Activated CD8-positive, alpha-beta T cell treated with anti-CD3 and anti-CD28 coated beads, Interleukin-2, amount 10 ng/mL, durations not matched to agents 7 days and 5 days (primary cell): ENCODE measurements at regions of chr4 and their contacts with region 1.

Region 1: GRCh38 chr4:25367004-25367621 is 9.9 kb upstream of the ANAPC4 start:
- DNase-seq: no peak
- ATAC-seq: no peak
- H3K4me3 Mint-ChIP-seq: no peak overlapping the region
- H3K27ac Mint-ChIP-seq: no peak overlapping the region
- H3K4me1 Mint-ChIP-seq: no peaks in the 10 kb centered on the region
- H3K27me3 Mint-ChIP-seq: no peaks in the 10 kb centered on the region

Region 2: DNA sequence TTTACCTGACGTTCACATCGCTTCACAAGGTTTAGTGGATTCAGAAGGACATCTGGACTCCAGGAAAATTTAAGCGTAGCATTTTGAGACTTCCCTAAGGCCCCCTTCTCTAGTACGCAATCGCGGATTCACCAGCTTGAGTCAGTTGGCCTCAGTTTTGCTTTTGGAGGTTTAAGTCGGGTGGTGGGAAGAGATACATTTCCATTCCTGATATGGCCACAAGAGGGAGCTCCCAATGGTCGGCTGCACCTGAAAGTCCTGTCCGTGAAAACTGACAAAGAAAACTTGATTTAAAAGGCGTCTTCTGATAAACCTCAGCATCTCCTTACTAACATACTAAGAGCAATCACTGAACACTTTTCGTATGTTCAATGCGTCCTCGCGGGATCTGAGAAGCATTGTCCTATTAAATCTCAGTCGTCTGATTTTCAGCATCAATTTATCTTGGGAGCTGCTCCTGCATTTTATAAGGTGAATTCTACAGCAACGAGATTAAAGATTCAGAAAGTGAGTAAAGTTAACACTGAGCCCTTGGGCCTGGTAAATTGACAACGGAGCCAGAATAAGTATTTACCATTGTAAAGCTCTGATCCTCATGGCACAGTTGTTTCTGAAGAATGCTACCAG is 386.9 kb before region 1 on chr4:
- CTCF ChIA-PET with region 1: interaction called, 52 read pairs
- POLR2A ChIA-PET with region 1: no interaction called
- DNase-seq: peak; percentile 66
- ATAC-seq: peak; percentile 61
- H3K4me3 Mint-ChIP-seq: peak overlapping the region; percentile 36
- H3K27ac Mint-ChIP-seq: no peak overlapping the region
- H3K4me1 Mint-ChIP-seq: peaks cover 11% of the 10 kb centered on the region
- H3K27me3 Mint-ChIP-seq: peaks cover 3% of the 10 kb centered on the region

Region 3: GRCh38 chr4:25159884-25160713 is 207.0 kb before region 1 on chr4 and contains the start of gene SEPSECS:
- CTCF ChIA-PET with region 1: interaction called, 16 read pairs
- POLR2A ChIA-PET with region 1: no interaction called
- DNase-seq: peak; percentile 97
- ATAC-seq: peak; percentile 89
- H3K4me3 Mint-ChIP-seq: peak within 1 kb of the TSS; percentile 89
- H3K27ac Mint-ChIP-seq: peak within 1 kb of the TSS; percentile 95
- H3K4me1 Mint-ChIP-seq: peaks cover 33% of the 10 kb centered on the region
- H3K27me3 Mint-ChIP-seq: no peaks in the 10 kb centered on the region
- total RNA-seq, gene SEPSECS: 10.8 to 12.5 TPM

Region 4: DNA sequence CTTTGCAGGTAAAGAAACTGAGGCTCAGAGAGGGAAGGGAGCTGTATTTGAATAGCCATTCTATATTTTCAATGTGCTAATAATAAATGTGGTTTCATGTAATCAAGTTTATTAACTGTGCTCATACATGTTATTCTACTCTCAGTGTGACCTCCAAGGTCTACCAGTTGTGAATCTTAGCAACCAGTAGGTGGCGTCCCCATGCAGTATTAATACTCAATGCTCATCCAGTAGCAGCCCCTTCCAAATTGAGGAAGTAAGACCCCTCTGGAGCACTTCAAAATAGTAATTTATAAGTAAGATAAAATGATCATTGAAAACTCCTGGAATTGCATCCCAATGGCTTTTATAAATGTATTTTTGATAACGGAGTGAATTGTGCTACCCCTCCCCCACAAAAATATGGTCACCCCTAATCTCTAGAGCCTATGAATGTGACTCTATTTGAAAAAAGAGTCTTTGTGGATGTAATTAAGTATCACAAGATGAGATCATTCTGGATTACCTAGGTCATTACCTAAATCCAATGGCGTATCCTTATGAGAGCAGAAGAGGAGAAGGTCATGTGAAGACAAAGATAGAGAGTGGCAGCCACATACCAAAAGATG is 186.5 kb before region 1 on chr4:
- CTCF ChIA-PET with region 1: interaction called, 27 read pairs
- POLR2A ChIA-PET with region 1: no interaction called
- DNase-seq: peak; percentile 57
- ATAC-seq: peak; percentile 79
- H3K4me3 Mint-ChIP-seq: no peak overlapping the region
- H3K27ac Mint-ChIP-seq: no peak overlapping the region
- H3K4me1 Mint-ChIP-seq: peaks cover 14% of the 10 kb centered on the region
- H3K27me3 Mint-ChIP-seq: no peaks in the 10 kb centered on the region

Region 5: DNA sequence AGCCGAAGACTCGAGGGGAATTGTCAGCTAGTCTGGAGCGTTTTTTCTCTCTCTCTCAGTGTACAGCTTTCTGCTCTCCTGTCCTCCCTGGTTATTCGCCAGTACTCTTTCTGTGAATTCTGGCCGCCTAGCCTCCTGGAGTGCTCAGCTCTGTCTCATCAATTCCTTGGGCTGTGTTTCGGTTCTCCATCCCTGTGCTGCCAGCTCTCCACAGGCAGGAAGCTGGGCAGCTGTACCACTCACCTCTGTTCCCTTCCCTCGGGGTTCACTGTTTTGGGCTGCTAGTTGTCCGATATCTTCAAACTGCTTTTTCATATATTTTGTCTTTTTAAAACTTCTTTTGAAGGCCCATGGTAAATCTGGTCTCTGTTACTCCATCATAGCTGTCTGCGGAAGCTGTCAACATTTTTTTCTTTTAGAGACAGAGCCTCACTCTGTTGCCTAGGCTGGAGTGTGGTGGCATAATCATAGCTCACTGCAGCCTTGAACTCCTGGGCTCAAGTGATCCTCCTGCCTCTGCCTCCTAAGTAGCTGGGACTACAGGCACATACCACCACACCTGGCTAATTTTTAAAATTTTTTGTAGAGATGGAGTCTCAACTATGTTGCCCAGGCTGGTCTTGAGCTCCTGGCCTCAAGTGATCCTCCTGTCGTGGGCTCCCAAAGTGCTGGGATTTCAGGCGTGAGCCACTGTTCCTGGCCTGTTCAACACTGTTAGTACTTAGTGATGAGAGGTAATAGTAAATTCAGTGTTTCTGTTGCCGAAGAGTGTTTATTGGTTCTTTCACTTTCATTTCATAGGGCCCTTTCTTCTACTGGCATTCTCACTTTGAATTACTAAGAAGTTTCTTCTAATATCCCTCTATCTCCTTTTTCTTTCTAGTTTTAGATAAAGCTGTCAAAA is 36.0 kb before region 1 on chr4:
- CTCF ChIA-PET with region 1: interaction called, 14 read pairs
- POLR2A ChIA-PET with region 1: interaction called, 3 read pairs
- DNase-seq: no peak
- ATAC-seq: peak; percentile 90
- H3K4me3 Mint-ChIP-seq: peak overlapping the region; percentile 82
- H3K27ac Mint-ChIP-seq: peak overlapping the region; percentile 96
- H3K4me1 Mint-ChIP-seq: peaks cover 19% of the 10 kb centered on the region
- H3K27me3 Mint-ChIP-seq: no peaks in the 10 kb centered on the region

Region 6: DNA sequence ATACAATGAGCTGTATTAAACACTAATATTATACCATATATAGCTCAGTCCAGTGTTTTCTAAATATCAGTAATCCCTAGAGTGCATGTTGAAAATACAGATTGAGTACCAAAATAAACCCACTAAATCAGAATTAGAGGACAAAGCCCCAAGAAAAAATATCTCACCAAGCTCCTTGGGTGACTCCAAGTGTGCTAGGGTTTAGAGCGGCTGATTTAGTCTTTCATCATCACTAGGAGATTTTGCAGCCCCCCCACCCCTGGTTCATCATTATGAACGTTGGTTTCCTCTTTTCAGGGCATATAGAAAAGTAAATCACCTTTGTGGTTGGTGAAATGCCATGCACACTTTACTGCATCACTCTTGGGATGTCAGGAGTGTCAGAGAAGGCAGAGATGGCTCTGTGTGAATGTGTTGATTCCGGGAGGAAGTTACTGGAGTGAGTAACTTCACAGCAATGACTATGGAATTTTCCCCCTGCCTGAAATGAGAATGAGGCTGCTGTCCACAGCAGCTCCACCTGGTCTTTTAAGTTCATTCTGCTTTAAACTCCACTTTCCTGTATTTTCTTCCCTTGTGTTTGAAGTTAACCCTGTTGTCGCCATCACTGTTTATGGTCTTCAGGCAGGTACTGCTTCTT is 15.2 kb before region 1 on chr4:
- CTCF ChIA-PET with region 1: interaction called, 15 read pairs
- POLR2A ChIA-PET with region 1: no interaction called
- DNase-seq: no peak
- ATAC-seq: no peak
- H3K4me3 Mint-ChIP-seq: no peak overlapping the region
- H3K27ac Mint-ChIP-seq: no peak overlapping the region
- H3K4me1 Mint-ChIP-seq: no peaks in the 10 kb centered on the region
- H3K27me3 Mint-ChIP-seq: no peaks in the 10 kb centered on the region